Activated naive CD4-positive, alpha-beta T cell treated with anti-CD3 and anti-CD28 coated beads, Interleukin-2, amount 10 ng/mL, durations not matched to agents 7 days and 5 days (primary cell): ENCODE measurements at regions of chr19 and their contacts with region 1.

Region 1: GRCh38 chr19:10602330-10603083 is 15.4 kb upstream of the AP1M2 start:
- DNase-seq: peak; percentile 91
- H3K4me3 Mint-ChIP-seq: peak overlapping the region; percentile 99
- H3K27ac Mint-ChIP-seq: peak overlapping the region; percentile 100
- H3K4me1 Mint-ChIP-seq: peaks cover 35% of the 10 kb centered on the region
- H3K27me3 Mint-ChIP-seq: peaks cover 28% of the 10 kb centered on the region

Region 2: GRCh38 chr19:10478903-10479384 is 123.6 kb before region 1 on chr19:
- CTCF ChIA-PET with region 1: no interaction called
- DNase-seq: peak; percentile 92
- H3K4me3 Mint-ChIP-seq: peak overlapping the region; percentile 54
- H3K27ac Mint-ChIP-seq: no peak overlapping the region
- H3K4me1 Mint-ChIP-seq: peaks cover 20% of the 10 kb centered on the region
- H3K27me3 Mint-ChIP-seq: peaks cover 14% of the 10 kb centered on the region

Region 3: DNA sequence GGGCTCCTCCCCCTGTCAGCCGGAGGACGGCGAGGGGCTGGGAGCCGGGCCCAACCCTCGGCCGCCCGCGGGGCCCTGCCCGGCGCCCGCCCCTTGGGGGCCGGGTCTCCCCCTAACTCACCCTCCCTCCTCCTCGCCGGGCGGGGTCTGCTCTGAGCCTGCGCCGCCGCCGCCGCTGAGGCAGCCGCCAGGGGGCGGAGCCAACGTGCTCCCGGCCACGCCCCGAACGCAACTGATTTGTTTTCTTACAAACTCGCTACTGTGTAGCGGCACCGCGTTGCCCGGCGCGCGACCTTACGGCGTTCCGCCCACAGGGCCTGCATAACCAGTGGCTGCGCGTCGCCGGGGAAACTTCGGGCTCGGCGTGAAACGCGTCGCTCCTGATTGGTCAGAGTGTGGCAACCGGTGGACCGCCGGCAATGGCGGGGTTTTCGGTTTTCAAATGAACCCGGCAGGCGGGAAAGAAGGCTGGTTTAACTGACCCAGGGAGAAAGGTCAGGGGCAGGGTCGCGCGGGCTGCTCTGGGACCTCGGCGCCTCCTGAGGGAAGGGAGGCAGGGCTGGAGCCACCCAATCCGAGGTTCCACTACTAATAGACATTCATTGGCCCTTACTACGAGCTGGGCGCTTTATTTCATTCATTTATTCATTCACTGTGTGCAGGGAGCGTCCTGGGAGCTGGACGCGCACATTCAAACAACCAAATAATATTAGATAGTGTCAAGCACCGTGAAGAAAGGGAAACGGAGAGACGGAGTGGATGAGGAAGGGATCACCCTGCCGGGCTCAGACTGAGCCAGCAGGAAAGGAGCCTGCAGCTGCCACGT is 33.5 kb before region 1 on chr19 and contains the start of gene CDKN2D:
- CTCF ChIA-PET with region 1: no interaction called
- DNase-seq: peak; percentile 100
- H3K4me3 Mint-ChIP-seq: peak within 1 kb of the TSS; percentile 84
- H3K27ac Mint-ChIP-seq: peak within 1 kb of the TSS; percentile 99
- H3K4me1 Mint-ChIP-seq: peaks cover 44% of the 10 kb centered on the region
- H3K27me3 Mint-ChIP-seq: no peaks in the 10 kb centered on the region

Region 4: DNA sequence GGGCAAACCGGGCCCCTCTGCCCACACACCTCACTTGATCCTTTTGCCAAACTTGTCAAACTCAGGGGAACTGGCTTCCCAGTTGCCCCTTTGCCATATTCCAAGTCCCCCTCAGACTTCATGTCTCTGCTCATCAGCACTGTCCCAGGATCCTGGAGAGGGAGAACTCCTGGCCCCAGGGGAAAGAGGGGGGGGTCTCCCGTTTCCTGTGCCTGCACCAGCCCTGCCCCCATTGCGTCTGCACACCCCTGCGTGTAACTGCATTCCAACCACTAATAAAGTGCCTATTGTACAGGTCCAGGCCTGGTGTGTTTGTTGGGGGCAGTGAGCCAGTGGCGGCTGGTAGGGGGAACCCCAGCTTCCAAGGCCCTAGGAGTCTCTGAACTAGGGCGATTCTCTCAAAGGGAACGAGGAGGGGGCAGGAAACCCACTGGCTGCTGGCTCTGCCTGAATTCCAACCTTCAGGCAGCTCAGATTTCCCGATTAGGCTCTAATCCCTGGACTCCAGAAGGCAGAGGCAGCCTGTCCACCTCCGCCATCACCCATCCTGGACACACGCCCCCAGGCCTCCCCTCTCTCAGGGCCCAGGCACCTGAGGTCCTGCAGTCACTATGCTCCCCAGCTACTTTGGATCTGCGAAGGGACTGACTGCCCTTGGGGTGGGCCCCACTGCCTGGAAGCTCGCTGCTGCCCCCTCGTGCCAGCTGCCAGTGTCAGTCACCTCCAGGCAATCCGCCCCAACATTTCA is 41.9 kb after region 1 on chr19:
- CTCF ChIA-PET with region 1: interaction called, 11 read pairs
- DNase-seq: peak; percentile 89
- H3K4me3 Mint-ChIP-seq: no peak overlapping the region
- H3K27ac Mint-ChIP-seq: peak overlapping the region; percentile 74
- H3K4me1 Mint-ChIP-seq: peaks cover 3% of the 10 kb centered on the region
- H3K27me3 Mint-ChIP-seq: no peaks in the 10 kb centered on the region